AG04450 (cell line): ENCODE measurements at regions of chr2 and their contacts with region 1.

Region 1: DNA sequence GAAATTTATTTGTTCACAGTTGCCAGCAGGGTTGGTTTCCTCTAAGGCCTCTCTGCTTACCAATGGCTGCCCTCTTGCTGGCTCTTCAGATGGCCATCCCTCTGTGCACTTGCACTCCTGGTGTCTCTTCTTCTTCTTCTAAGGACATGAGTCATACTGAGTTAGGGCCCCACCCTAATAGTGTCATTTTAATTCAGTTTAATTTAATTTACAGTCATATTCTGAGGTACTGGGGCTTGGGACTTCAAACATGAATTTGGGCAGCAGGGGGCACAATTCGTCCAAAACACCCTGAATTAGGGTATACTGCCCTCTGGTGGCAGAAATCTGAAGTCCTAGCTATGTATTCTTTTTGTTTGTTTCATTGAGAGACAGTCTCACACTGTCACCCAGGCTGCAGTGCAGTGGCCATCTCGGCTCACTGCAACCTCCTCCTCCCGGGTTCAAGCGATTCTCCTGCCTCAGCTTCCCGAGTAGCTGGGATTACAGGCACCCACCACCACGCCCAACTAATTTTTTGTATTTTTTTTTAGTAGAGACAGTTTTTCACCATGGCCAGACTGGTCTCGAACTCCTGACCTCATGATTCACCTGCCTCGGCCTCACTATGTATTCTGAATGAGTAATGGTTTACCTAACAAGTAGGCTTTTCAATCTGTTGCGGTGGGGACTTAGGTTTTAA is 19.8 kb downstream of the SLC4A1AP start:
- DNase-seq: peak; percentile 75
- H3K4me3 ChIP-seq: no peak overlapping the region
- H3K27ac ChIP-seq: peak overlapping the region; percentile 39
- H3K27me3 ChIP-seq: no peaks in the 10 kb centered on the region
- CTCF ChIP-seq: peak; percentile 93

Region 2: DNA sequence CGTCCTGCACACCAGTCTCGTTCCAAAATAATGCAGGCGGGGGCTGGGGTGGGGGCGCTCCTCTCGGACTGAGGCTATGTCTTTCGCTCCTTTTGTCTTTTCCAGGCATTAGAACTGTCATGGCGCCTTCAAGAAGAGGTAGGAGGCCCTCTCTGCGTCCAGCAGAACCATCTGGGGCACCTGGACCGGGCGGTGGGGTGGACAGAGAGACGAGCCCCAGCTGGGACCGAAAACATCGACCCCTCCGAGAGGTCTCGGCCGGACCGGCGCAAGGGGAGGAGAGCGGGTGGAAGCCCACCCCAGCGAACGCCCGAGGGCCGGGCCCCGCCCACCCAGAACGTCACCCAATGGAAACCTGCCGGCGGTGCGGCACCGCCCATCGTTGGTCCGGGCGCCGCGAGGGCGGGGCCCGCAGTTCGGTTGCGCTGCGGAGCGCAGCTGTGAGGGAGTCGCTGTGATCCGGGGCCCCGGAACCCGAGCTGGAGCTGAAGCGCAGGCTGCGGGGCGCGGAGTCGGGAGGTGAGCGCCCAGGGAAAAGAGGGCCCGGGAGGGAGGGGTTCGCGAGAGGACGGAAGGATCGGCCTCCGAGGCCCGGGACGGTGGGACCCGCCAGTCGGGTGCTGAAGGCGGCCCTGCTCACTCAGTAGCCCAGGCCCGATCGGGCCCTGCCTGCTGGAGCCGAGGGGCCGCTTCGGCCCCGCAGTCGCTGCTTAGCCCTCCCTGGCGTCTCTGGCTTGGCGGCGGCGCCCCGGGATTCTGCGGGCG is 255.1 kb before region 1 on chr2 and contains the start of gene NRBP1:
- CTCF ChIA-PET with region 1: interaction called, 11 read pairs
- POLR2A ChIA-PET with region 1: no interaction called
- DNase-seq: peak; percentile 68
- H3K4me3 ChIP-seq: peak within 1 kb of the TSS; percentile 80
- H3K27ac ChIP-seq: peak within 1 kb of the TSS; percentile 89
- H3K27me3 ChIP-seq: no peaks in the 10 kb centered on the region
- CTCF ChIP-seq: no peak
- polyA plus RNA-seq, gene NRBP1: 181 and 182 TPM in 2 replicates

Region 3: GRCh38 chr2:27655155-27655951 is 28.2 kb before region 1 on chr2:
- CTCF ChIA-PET with region 1: interaction called, 18 read pairs
- POLR2A ChIA-PET with region 1: no interaction called
- DNase-seq: peak; percentile 63
- H3K4me3 ChIP-seq: no peak overlapping the region
- H3K27ac ChIP-seq: no peak overlapping the region
- H3K27me3 ChIP-seq: no peaks in the 10 kb centered on the region
- CTCF ChIP-seq: no peak

Region 4: DNA sequence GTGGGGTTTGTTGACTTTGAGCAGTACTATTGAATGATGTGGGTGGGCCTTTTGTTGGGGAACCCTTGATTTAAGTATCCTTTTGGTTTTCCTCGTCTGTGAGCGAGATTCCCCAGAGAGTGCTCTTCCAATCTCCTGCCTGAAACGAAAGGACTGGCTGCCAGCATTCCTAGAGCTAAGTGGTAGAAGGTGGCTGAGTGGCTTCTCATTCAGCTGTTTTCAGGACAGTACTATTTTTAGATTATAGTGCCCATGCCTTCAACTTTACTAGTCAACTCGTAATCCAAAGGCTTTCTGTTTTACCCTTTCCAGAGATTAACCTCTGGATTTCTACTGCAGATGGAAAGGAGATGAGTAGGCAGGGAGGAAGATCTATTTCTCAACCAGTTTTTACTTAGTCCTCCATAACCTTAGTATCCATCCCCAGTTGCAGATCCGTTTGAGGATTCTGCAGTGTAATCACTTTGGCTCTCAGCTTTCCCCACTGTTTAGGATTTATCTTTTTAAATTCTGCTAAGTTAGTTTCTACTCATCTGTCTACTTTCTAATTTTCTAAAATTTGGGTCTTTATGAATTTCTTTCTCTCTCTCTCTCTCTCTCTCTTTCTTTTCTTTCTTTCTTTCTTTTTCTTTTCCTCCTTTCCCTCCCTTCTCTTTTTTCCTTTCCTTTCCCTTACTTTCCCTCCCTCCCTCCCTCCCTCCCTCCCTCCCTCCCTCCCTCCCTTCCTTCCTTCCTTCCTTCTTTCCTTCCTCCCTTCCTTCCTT is 10.6 kb before region 1 on chr2:
- CTCF ChIA-PET with region 1: interaction called, 51 read pairs
- POLR2A ChIA-PET with region 1: no interaction called
- DNase-seq: no peak
- H3K4me3 ChIP-seq: no peak overlapping the region
- H3K27ac ChIP-seq: no peak overlapping the region
- H3K27me3 ChIP-seq: no peaks in the 10 kb centered on the region
- CTCF ChIP-seq: no peak

Region 5: GRCh38 chr2:27703638-27704341 is 20.3 kb after region 1 on chr2:
- CTCF ChIA-PET with region 1: interaction called, 39 read pairs
- POLR2A ChIA-PET with region 1: interaction called, 3 read pairs
- DNase-seq: peak; percentile 94
- H3K4me3 ChIP-seq: no peak overlapping the region
- H3K27ac ChIP-seq: peak overlapping the region; percentile 61
- H3K27me3 ChIP-seq: no peaks in the 10 kb centered on the region
- CTCF ChIP-seq: peak; percentile 90

Region 6: GRCh38 chr2:28413142-28413898 is 729.8 kb after region 1 on chr2:
- CTCF ChIA-PET with region 1: interaction called, 10 read pairs
- POLR2A ChIA-PET with region 1: no interaction called
- DNase-seq: no peak
- H3K4me3 ChIP-seq: no peak overlapping the region
- H3K27ac ChIP-seq: peak overlapping the region; percentile 61
- H3K27me3 ChIP-seq: no peaks in the 10 kb centered on the region
- CTCF ChIP-seq: peak; percentile 21; the same call in 1 of the 2 replicates